ENCODE measurements at regions of chr1 and their contacts with region 1.

Region 1: DNA sequence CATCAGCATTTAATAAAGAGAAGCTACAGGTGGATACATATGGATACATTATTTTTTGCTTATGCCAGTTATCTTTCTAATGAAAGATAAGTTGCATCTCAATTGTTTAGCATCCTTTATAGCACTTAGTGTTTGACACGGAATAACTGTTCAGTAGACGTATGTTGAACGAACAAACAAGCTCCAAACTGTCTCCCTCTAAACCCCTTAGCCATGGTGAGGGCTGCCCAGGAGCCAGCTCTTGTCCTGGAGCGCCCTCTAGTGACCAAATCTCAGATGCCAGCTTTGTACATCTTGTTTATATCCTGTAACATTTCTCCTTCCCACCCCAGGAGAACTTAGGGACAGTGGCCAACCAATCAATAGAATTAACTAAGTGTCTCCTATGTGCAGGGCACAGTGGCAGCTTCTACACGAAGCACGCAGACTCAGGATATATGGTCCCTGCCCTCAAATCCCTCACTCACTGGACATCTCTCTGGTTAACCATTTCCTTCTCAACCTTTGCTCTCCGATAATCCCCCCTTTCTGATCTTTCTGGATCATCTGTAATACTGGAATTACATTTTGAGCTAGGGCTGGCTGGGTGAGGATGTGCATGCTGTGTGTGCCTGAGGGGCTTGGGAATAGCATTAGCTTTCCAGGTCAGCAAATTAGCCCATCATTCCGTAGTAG is 22.9 kb downstream of the KCNA10 start:
- DNase-seq: peak; percentile 86
- H3K4me3 ChIP-seq: no peak overlapping the region; a peak in 1 of 4 replicates
- H3K27ac ChIP-seq: no peak overlapping the region
- H3K4me1 ChIP-seq: no peaks in the 10 kb centered on the region
- H3K27me3 ChIP-seq: no peaks in the 10 kb centered on the region; the same call in 1 of the 2 replicates
- CTCF ChIP-seq: peak; percentile 97
- EP300 ChIP-seq: no peak
- RAD21 ChIP-seq: peak; percentile 97

Region 2: DNA sequence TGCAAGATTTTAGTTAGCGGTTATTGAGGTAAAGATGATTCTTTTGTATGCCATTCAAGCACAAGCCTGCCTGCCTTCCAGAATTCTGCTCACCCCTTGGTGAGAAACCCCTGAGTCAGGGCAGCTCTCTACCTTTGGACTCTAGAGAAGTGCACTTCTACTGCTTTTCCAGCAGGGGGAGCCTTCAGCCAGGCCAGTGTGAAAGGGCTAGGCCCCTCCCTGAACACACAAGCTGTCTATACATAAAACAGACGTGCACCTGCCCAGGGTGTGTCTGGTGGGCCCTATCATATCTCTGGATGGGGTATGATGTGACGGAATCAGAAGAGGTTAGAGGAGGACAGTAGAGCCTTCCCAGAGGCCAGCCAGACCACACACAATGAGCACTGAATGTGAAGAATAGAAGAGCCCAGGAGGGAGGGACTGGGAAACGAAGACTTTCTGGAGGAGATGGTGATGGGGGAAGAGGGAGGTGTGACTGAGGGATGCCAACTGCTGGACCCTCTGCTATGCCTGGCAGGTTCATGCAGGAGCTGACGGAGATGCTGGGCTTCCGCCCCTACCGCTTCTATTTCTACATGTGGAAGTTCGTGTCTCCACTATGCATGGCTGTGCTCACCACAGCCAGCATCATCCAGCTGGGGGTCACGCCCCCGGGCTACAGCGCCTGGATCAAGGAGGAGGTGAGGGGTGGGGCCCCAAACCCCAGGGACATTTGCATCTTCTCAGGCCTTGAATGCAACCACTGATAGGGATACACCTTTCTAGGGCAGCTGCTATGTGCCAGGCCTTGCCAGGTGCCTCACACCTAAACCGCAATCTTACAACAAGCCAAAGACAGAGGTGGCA is 298.9 kb before region 1 on chr1:
- CTCF ChIA-PET with region 1: interaction called, 162 read pairs
- POLR2A ChIA-PET with region 1: no interaction called
- DNase-seq: peak; percentile 89
- H3K4me3 ChIP-seq: peak overlapping the region in 1 of 2 experiments; percentile 11; a peak in 1 of 4 replicates
- H3K27ac ChIP-seq: no peak overlapping the region; a peak in 1 of 4 replicates
- H3K4me1 ChIP-seq: peaks cover 0 to 20% of the 10 kb centered on the region in 2 experiments; a peak in 1 of 4 replicates
- H3K27me3 ChIP-seq: no peaks in the 10 kb centered on the region
- CTCF ChIP-seq: peak; percentile 90
- EP300 ChIP-seq: no peak
- RAD21 ChIP-seq: peak; percentile 68

Region 3: GRCh38 chr1:110319332-110320152 is 176.5 kb before region 1 on chr1:
- CTCF ChIA-PET with region 1: interaction called, 19 read pairs
- POLR2A ChIA-PET with region 1: no interaction called
- DNase-seq: no peak
- H3K4me3 ChIP-seq: no peak overlapping the region
- H3K27ac ChIP-seq: no peak overlapping the region
- H3K4me1 ChIP-seq: no peaks in the 10 kb centered on the region; a peak in 1 of 4 replicates
- H3K27me3 ChIP-seq: no peaks in the 10 kb centered on the region
- CTCF ChIP-seq: no peak
- EP300 ChIP-seq: no peak
- RAD21 ChIP-seq: no peak

Region 4: GRCh38 chr1:110420874-110421793 is 74.9 kb before region 1 on chr1:
- CTCF ChIA-PET with region 1: interaction called, 135 read pairs
- POLR2A ChIA-PET with region 1: no interaction called
- DNase-seq: no peak
- H3K4me3 ChIP-seq: no peak overlapping the region
- H3K27ac ChIP-seq: no peak overlapping the region
- H3K4me1 ChIP-seq: no peaks in the 10 kb centered on the region; a peak in 1 of 4 replicates
- H3K27me3 ChIP-seq: no peaks in the 10 kb centered on the region
- CTCF ChIP-seq: no peak
- EP300 ChIP-seq: no peak
- RAD21 ChIP-seq: no peak

Region 5: DNA sequence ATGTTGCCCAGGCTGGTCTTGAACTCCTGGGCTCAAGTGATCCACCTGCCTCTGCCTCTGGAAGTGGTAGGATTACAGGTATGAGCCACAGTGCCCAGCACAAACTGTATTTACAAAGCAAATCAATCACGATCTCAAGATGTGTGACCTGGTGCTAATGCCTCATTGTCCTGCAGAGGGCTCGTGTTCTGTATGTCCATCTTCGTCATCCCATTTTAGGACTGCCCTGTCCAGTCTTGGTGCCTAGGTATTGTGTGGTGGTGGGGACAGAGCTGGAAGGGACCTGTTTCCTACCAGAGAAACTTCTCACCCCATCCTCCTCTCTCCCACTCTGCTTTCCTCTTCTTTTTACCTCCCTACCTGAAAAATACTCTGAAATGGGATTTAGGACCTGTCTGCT is 24.9 kb before region 1 on chr1:
- CTCF ChIA-PET with region 1: interaction called, 132 read pairs
- POLR2A ChIA-PET with region 1: no interaction called
- DNase-seq: no peak
- H3K4me3 ChIP-seq: no peak overlapping the region
- H3K27ac ChIP-seq: no peak overlapping the region
- H3K4me1 ChIP-seq: peaks cover 0 to 2% of the 10 kb centered on the region in 2 experiments; a peak in 1 of 4 replicates
- H3K27me3 ChIP-seq: no peaks in the 10 kb centered on the region
- CTCF ChIP-seq: no peak
- EP300 ChIP-seq: no peak
- RAD21 ChIP-seq: no peak

Region 6: DNA sequence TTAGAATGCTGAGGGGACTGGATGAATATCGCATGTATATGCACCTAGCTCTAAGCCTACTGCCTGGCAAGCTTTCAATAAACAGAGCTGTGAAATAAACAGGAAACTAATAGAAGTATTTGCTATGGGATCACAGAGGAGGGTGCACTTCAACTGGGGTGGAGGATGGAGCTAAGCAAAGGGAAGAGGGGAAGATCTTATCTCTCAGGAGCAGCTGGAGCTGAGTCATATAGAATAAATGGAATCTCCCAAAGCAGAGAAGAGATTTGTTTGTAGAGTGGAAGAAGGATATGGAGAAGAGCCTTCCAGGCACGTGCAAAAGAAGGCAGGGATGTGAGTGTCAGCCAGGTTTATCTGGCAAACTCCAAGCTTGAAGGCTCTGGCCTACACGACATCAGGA is 39.9 kb after region 1 on chr1:
- CTCF ChIA-PET with region 1: interaction called, 11 read pairs
- POLR2A ChIA-PET with region 1: no interaction called
- DNase-seq: no peak
- H3K4me3 ChIP-seq: no peak overlapping the region
- H3K27ac ChIP-seq: no peak overlapping the region
- H3K4me1 ChIP-seq: no peaks in the 10 kb centered on the region; a peak in 1 of 4 replicates
- H3K27me3 ChIP-seq: no peaks in the 10 kb centered on the region
- CTCF ChIP-seq: no peak
- EP300 ChIP-seq: no peak
- RAD21 ChIP-seq: no peak